HEK293 (cell line): ENCODE measurements at regions of chr10 and their contacts with region 1.

Region 1: DNA sequence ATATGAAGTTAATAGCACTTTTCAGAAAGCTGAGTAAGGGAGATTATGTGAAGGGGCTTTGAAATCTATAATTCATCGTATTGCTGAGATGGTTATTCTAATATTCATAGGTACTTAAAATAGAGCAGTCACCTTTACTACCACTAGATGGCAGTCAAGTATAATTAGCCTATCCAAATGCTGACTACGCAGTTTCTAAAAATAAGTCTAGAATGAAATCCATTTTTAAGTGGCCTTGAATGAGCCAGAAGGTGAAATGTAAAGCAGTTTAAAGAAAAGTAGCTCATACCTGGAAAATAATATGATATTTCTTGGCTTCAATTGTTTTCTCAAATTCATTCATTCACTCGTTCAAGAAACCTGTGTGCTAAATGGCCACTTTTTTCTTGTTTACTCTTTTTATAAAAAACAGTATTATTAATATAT is 1277.1 kb downstream of the GATA3 start:
- H3K4me3 ChIP-seq: no peak overlapping the region
- H3K27ac ChIP-seq: no peak overlapping the region
- H3K4me1 ChIP-seq: no peaks in the 10 kb centered on the region
- CTCF ChIP-seq: no peak

Region 2: GRCh38 chr10:9302120-9302746 is 29.4 kb before region 1 on chr10:
- CTCF ChIA-PET with region 1: no interaction called
- POLR2A ChIA-PET with region 1: no interaction called
- H3K4me3 ChIP-seq: no peak overlapping the region
- H3K27ac ChIP-seq: no peak overlapping the region
- H3K4me1 ChIP-seq: peaks cover 5% of the 10 kb centered on the region
- CTCF ChIP-seq: 0 out of 2 replicates have a peak, but pooled peaks have one; percentile 21

Region 3: DNA sequence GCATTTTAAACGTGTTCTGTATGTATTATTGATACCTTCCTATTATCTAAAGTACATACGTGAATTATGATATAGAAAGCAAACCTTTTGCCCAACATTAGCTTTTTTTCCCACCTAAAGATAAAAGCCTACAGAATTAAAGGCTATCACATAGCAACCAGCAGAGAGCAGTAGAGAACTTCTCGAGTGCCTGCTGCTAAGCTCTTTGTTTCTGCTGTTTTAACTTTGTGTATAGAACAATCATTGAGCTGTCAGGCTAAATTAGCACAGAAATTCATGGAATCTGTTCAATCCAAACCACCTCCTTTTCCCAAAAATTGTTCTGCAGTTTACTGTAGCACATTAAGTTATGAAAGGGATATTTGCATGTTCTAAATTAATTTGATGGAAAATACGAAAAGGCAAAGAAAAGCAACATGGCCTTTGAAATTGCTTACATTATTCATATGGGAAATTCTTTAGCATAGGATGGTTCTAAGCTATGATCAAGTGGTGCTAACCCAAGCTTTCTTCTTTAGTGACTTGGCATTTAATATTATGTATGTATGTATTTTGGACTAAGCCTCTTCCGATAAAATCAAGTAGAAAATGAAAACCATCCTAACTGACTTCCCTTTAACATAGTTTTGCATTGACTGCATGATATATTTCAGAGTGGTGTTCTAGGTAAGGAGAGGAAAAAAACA is 11.4 kb after region 1 on chr10:
- CTCF ChIA-PET with region 1: interaction called, 11 read pairs
- POLR2A ChIA-PET with region 1: no interaction called
- H3K4me3 ChIP-seq: no peak overlapping the region
- H3K27ac ChIP-seq: no peak overlapping the region
- H3K4me1 ChIP-seq: no peaks in the 10 kb centered on the region
- CTCF ChIP-seq: no peak

Region 4: DNA sequence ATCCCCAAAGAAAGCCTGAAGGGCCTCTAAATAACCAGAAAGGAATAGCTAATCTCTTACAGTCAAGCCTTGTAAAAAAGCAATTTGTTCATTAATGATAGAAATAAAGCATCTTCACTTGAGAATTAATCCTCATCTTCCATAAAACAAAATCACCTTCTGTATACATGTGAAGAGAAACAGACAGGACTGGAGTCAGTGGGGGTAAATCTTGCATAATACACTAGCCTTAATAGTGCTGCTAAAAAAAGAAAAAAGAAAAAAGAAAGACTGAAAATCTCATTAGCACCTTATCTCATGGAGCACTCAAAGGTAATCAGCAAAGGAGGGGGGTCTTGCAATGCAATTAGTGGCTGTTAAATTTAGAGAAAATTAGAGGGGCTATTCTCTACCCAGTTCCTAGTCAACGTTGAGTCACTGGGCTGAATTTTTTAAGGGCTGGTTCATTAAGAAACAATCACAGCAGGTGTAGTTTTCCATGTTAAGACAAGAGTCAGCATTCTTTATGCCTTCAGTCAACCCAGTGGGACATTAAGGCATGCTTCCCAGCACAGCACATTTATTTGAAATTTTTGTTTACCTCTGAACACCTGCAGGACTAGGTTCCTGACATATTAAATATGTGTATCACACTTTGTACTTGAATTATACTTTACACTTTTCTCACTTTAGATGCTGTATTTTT is 230.4 kb after region 1 on chr10:
- CTCF ChIA-PET with region 1: no interaction called
- POLR2A ChIA-PET with region 1: no interaction called
- H3K4me3 ChIP-seq: no peak overlapping the region
- H3K27ac ChIP-seq: no peak overlapping the region
- H3K4me1 ChIP-seq: no peaks in the 10 kb centered on the region
- CTCF ChIP-seq: no peak